Activated CD8-positive, alpha-beta T cell treated with anti-CD3 and anti-CD28 coated beads for 36 hours (primary cell): ENCODE measurements at regions of chr1 and their contacts with region 1.

Region 1: GRCh38 chr1:94805912-94806311 is 14.2 kb upstream of the SLC44A3 start:
- DNase-seq: peak; percentile 57
- ATAC-seq: peak; percentile 90
- H3K4me3 Mint-ChIP-seq: no peak overlapping the region
- H3K27ac Mint-ChIP-seq: no peak overlapping the region
- H3K4me1 Mint-ChIP-seq: peaks cover 5% of the 10 kb centered on the region
- H3K27me3 Mint-ChIP-seq: peaks cover 1% of the 10 kb centered on the region
- CTCF ChIP-seq: peak; percentile 99

Region 2: DNA sequence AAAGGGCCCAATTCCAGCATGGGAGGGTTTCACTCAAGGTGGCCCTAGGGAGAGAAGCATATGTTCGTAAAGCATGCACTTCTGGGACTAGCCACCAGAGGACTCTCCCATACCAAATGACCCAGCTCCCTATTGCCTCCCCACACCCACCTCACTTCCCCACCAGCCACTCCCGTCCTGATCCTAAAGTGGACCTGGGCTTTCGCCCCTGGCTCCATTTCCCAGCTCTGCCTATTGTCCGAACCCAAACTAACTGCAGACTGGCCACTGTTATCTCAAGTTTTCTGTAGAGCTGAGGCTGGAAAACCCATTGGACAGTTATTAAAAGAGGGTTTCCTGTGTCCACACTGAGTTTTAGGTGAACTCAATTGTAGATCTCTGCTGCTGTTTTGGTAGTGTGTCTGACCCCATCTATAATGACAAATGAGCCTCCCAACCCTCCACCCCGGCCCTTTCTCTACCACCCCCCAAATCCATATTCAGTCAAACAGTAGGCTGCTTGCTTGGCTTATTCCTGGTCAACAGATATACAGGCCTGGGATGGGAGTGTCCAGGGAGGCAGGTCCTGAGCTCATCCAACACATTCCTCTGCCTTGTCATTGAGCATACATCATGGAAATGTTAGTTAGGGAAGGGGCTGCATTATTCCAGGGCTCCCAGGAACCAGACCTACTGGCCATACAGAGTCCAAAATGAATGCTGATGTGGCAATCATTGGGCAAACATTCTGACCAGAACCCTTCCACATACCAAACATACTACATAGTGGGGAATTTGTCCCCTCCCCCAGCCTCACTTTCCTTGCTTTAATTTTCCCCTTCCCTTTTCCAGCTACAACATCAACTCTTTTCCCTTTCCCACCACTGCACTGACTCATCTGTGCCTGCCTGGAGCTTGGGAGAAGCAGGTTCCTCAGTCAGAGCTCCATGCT is 744.1 kb before region 1 on chr1:
- CTCF ChIA-PET with region 1: interaction called, 3 read pairs
- POLR2A ChIA-PET with region 1: no interaction called
- intact Hi-C with region 1: loop called (anchors 5 kb)
- DNase-seq: peak; percentile 67
- ATAC-seq: peak; percentile 85
- H3K4me3 Mint-ChIP-seq: no peak overlapping the region
- H3K27ac Mint-ChIP-seq: no peak overlapping the region
- H3K4me1 Mint-ChIP-seq: no peaks in the 10 kb centered on the region
- H3K27me3 Mint-ChIP-seq: peaks cover 4% of the 10 kb centered on the region
- CTCF ChIP-seq: peak; percentile 85

Region 3: DNA sequence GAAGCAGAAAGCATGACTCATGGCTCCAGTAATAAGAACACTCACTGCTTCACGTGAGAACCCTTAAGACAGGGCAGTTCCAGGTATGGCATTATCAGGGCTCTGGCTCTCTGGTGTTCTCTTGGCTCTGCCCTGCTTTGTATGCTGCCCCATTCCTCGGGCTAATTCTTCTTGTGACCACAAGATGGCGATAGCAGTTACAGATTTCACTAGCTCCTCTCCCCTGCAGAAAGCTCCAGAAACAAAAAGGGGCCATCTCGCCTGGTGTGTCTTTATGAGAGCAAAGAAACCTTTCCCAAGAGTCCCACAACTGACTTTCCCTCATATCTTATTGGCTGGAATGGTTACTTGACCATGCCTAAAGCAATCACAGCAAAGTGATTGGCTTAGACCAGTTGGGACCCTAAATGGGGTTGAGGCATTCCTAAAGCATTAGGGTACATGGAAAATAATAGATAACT is 324.4 kb before region 1 on chr1:
- CTCF ChIA-PET with region 1: interaction called, 72 read pairs
- POLR2A ChIA-PET with region 1: no interaction called
- intact Hi-C with region 1: loop called (anchors 2 kb)
- DNase-seq: peak; percentile 37
- ATAC-seq: peak; percentile 84
- H3K4me3 Mint-ChIP-seq: no peak overlapping the region
- H3K27ac Mint-ChIP-seq: no peak overlapping the region
- H3K4me1 Mint-ChIP-seq: no peaks in the 10 kb centered on the region
- H3K27me3 Mint-ChIP-seq: no peaks in the 10 kb centered on the region
- CTCF ChIP-seq: peak; percentile 75

Region 4: GRCh38 chr1:94486990-94487389 is 318.9 kb before region 1 on chr1:
- CTCF ChIA-PET with region 1: interaction called, 72 read pairs
- POLR2A ChIA-PET with region 1: no interaction called
- intact Hi-C with region 1: no loop called
- DNase-seq: no peak
- ATAC-seq: no peak
- H3K4me3 Mint-ChIP-seq: no peak overlapping the region
- H3K27ac Mint-ChIP-seq: no peak overlapping the region
- H3K4me1 Mint-ChIP-seq: peaks cover 5% of the 10 kb centered on the region
- H3K27me3 Mint-ChIP-seq: no peaks in the 10 kb centered on the region
- CTCF ChIP-seq: no peak

Region 5: DNA sequence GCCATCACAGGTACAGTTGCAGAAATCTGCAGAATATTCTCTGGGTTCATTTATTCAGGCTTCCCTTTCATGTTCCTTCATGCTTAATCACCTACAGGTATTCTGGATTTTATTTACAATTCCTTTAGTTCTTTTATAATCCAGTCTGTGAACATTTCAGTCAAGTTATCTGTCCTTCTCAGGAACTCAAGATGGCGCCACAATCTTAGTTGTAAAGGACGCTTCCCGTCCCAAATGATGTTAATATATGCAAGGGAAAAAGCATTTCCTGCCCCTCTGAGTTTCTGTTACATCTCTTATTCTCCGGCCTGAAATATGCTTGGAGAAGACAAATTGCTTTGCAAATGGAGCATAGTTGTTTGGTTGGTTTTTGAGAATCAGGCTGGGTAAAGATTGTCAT is 283.6 kb before region 1 on chr1:
- CTCF ChIA-PET with region 1: interaction called, 25 read pairs
- POLR2A ChIA-PET with region 1: no interaction called
- intact Hi-C with region 1: loop called (anchors 10 kb)
- DNase-seq: no peak
- ATAC-seq: no peak
- H3K4me3 Mint-ChIP-seq: no peak overlapping the region
- H3K27ac Mint-ChIP-seq: no peak overlapping the region
- H3K4me1 Mint-ChIP-seq: no peaks in the 10 kb centered on the region
- H3K27me3 Mint-ChIP-seq: no peaks in the 10 kb centered on the region
- CTCF ChIP-seq: no peak

Region 6: GRCh38 chr1:94790246-94790645 is 15.7 kb before region 1 on chr1:
- CTCF ChIA-PET with region 1: interaction called, 13 read pairs
- POLR2A ChIA-PET with region 1: no interaction called
- intact Hi-C with region 1: no loop called
- DNase-seq: no peak
- ATAC-seq: no peak
- H3K4me3 Mint-ChIP-seq: no peak overlapping the region
- H3K27ac Mint-ChIP-seq: no peak overlapping the region
- H3K4me1 Mint-ChIP-seq: peaks cover 3% of the 10 kb centered on the region
- H3K27me3 Mint-ChIP-seq: peaks cover 2% of the 10 kb centered on the region
- CTCF ChIP-seq: no peak